Cardiac septum (tissue), 1 donor: ENCODE measurements at regions of chr6 and their contacts with region 1.

Region 1: DNA sequence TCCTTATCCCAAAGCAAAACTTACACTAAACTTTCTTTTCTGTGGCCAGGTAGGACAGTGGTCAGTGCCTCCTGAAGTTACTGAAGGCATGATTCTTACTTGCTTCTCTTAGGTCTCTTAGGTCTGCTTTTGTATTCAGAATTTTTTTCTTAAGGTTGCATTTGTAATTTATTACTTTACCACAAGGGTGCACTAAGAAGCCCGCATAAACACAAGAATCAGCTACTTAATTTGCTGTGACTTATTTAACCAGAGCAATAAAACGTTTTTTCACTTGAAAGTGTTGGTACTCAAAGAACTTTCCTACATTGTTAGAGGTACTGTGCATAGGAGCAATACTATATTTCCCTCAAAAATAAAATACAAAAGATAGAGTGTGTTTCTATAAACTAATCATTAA is 75.4 kb upstream of the LAMA2 start:
- DNase-seq: no peak

Region 2: GRCh38 chr6:128617285-128617684 is 190.3 kb before region 1 on chr6:
- intact Hi-C with region 1: no loop called
- DNase-seq: no peak

Region 3: DNA sequence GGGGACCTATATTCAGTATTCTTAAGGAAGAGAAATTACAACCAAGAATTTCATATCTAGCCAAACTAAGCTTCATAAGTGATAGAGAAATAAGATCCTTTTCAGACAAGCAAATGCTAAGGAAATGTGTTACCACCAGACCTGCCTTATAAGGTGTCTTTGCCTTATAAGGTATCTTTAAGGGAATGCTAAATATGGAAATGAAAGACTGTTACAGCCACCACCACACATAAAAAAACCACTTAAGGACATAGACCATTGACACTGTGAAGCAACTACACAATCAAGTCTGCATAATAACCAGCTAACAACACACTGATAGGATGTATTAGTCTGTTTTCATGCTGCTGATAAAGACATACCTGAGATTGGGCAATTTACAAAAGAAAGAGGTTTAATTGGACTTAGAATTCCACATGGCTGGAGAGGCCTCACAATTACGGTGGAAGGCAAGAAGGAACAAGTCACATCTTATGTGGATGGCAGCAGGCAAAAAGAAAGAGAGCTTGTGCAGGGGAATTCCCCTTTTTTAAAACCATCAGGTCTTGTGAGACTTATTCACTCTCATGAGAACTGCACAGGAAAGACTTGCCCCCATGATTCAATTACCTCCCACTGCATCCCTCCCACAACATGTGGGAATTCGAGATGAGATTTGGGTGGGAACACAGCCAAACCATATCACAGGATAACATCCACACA is 43.8 kb before region 1 on chr6:
- intact Hi-C with region 1: no loop called
- DNase-seq: no peak

Region 4: DNA sequence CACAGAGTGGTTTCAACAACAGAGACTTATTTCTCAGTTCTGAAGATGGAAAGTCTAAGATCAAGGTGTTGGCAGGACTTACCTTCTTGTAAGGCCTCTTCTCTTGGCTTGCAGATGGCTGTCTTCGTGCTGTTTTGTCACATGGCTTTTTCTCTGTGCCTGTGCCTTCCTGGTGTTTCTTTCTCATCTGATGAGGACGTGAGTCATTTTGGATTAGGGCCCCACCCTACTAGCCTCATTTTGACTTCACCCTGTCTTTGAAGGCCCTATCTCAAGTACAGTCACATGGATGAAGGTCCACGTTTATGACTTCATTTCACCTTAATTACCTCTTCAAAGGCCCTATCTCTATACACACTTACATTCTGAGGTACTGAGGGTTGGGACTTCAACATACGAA is 33.9 kb after region 1 on chr6:
- intact Hi-C with region 1: no loop called
- DNase-seq: no peak

Region 5: DNA sequence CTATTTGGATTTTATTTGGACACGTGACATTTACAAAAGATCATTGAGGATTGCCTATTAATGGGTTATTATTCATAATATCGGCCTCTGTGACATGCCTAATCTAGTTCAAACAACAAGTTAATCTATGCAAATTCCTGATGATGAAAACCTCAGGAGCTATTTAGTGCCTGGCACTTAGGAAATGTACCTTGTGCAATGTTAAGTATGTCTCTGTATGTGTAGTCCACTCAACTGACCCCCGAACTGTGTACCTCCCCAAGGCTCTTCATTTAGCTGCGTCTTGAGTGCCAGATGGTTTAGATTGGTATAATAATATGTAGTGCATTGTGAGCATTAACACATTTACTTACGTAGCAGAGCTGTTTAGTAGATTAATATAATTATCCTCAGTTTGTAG is 82.3 kb after region 1 on chr6:
- intact Hi-C with region 1: loop called (anchors 5 kb)
- DNase-seq: no peak

Region 6: GRCh38 chr6:128979071-128979470 is 171.5 kb after region 1 on chr6:
- intact Hi-C with region 1: loop called (anchors 10 kb)
- DNase-seq: no peak